Naive thymus-derived CD8-positive, alpha-beta T cell (primary cell): ENCODE measurements at regions of chr13 and their contacts with region 1.

Region 1: GRCh38 chr13:99200432-99201167 is at the start of gene UBAC2:
- DNase-seq: peak; percentile 91 to 99 (median 98)
- ATAC-seq: peak; percentile 74 to 82
- H3K4me3 Mint-ChIP-seq: peak within 1 kb of the TSS; percentile 93 to 100 (median 96)
- H3K27ac Mint-ChIP-seq: peak within 1 kb of the TSS; percentile 95 to 99 (median 97)
- H3K4me1 Mint-ChIP-seq: peaks cover 32 to 77% (median 70%) of the 10 kb centered on the region in 4 donors
- H3K27me3 Mint-ChIP-seq: peaks cover 0 to 1% (median 0%) of the 10 kb centered on the region in 5 donors
- polyA plus RNA-seq, gene UBAC2: 160 to 178 (median 173) TPM

Region 2: GRCh38 chr13:99087096-99087953 is 113.3 kb before region 1 on chr13:
- POLR2A ChIA-PET with region 1: interaction called, 13 read pairs
- DNase-seq: peak; percentile 90 to 95 (median 92)
- ATAC-seq: peak; percentile 76 to 77
- H3K4me3 Mint-ChIP-seq: peak overlapping the region; percentile 97 to 99 (median 99)
- H3K27ac Mint-ChIP-seq: peak overlapping the region; percentile 97 to 100 (median 99)
- H3K4me1 Mint-ChIP-seq: peaks cover 33 to 44% (median 37%) of the 10 kb centered on the region in 4 donors
- H3K27me3 Mint-ChIP-seq: peaks cover 0 to 8% (median 0%) of the 10 kb centered on the region in 5 donors

Region 3: GRCh38 chr13:99214232-99214631 is 13.6 kb after region 1 on chr13:
- POLR2A ChIA-PET with region 1: interaction called, 319 read pairs
- DNase-seq: peak in 6 of 10 donors; percentile 33 to 73 (median 54)
- ATAC-seq: peak; percentile 31 to 32
- H3K4me3 Mint-ChIP-seq: peak overlapping the region; percentile 59 to 98 (median 93)
- H3K27ac Mint-ChIP-seq: peak overlapping the region; percentile 84 to 100 (median 99)
- H3K4me1 Mint-ChIP-seq: peaks cover 46 to 88% (median 85%) of the 10 kb centered on the region in 4 donors
- H3K27me3 Mint-ChIP-seq: no peaks in the 10 kb centered on the region

Region 4: GRCh38 chr13:99237981-99238662 is 37.5 kb after region 1 on chr13:
- POLR2A ChIA-PET with region 1: interaction called, 27 read pairs
- DNase-seq: peak in 2 of 10 donors; percentile 27 to 41
- ATAC-seq: peak; percentile 81 to 85
- H3K4me3 Mint-ChIP-seq: peak overlapping the region; percentile 77 to 89 (median 86)
- H3K27ac Mint-ChIP-seq: peak overlapping the region; percentile 94 to 100 (median 97)
- H3K4me1 Mint-ChIP-seq: peaks cover 39 to 72% (median 70%) of the 10 kb centered on the region in 4 donors
- H3K27me3 Mint-ChIP-seq: no peaks in the 10 kb centered on the region

Region 5: DNA sequence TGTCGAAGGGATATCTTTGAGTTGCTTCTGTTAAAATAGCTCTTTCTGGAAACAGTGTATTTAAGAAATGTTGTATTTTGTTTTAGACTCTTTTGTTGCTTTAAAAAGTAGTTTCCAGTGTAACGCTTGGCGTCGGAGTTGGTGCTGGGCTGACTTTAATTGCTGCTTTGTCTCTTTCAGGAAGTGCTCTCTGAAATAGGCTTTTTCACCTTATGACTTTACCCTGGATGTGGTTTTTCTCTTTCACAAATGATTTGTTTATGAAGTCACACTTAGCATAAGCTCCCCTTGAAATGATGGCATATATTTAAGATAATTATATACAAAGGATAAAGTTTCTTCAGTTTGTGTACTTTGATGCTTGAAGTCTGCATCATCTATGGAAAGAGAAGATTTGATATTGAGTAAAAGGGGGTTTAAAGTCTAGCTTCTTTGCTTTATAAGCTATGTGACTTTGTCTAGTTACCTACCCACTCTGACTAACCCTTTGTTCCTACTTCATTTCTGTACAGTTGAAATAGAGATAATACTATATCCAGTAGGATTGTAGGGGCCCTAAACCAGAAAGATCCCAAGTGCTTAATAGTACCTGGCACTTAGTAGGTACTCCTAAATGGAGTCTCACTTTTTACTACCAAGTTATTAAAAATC is 57.7 kb after region 1 on chr13 and contains the start of gene GPR18:
- POLR2A ChIA-PET with region 1: interaction called, 231 read pairs
- DNase-seq: peak in 6 of 10 donors; percentile 17 to 78 (median 63)
- ATAC-seq: peak; percentile 74 to 81
- H3K4me3 Mint-ChIP-seq: peak within 1 kb of the TSS; percentile 87 to 98 (median 94)
- H3K27ac Mint-ChIP-seq: peak within 1 kb of the TSS; percentile 90 to 99 (median 98)
- H3K4me1 Mint-ChIP-seq: peaks cover 29 to 87% (median 74%) of the 10 kb centered on the region in 4 donors
- H3K27me3 Mint-ChIP-seq: no peaks in the 10 kb centered on the region
- polyA plus RNA-seq, gene GPR18: 22.2 to 37.0 (median 26.1) TPM

Region 6: DNA sequence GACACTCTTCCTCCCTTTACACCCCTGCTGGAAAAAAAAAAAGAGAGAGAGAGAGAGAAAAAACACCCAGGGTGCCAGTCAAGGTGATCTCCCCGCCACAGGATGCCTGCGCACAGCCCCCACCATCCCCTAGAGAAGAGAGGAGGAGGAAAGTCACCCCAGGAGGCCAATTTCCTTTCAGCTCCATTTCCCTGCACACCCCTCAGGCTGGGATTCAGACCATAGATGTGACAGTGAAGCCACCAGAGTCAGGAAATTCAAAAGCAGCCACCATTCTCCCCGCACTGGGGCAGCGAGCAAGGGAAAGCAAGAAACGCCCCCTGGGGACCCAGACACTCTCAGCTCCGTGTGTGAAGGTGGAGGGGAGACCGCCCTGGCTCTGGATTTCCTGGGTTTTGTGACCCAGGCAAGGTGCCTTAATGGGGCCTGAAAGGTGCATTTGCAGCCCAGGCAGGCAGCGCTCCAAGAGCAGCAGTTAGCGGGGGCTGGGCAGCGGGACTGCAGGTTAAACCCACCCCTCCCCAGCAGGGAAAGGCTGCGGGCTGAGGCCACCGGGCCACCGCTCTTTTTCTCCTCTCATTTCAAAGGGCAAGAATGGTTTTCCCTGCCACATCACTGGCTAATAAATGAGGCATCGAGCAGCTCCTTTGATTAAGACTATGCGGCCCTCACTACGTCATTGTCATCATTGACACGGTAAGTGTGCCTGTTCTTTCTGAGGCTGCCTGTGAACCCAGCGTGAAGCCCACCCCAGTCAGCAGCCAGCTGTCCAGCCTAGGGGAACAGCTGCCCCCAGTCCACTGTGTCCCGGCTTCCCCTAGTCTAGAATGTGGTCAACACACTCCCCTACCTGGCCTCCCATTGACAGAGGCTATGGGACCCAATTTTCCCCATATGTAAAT is 216.9 kb after region 1 on chr13:
- POLR2A ChIA-PET with region 1: interaction called, 13 read pairs
- DNase-seq: peak in 7 of 10 donors; percentile 43 to 74 (median 58)
- ATAC-seq: peak; percentile 14 to 43
- H3K4me3 Mint-ChIP-seq: peak overlapping the region in 2 of 10 donors; percentile 42 to 44
- H3K27ac Mint-ChIP-seq: no peak overlapping the region
- H3K4me1 Mint-ChIP-seq: peaks cover 30 to 67% (median 35%) of the 10 kb centered on the region in 4 donors
- H3K27me3 Mint-ChIP-seq: no peaks in the 10 kb centered on the region